Activated T-helper 1 cell treated with anti-CD3 and anti-CD28 coated beads, Interleukin-12 subunit alpha, Interleukin-12 subunit beta, Interleukin-2, Interleukin-4 antibody, amounts not matched to agents 30 ng/mL and 10 ng/mL and 1 ng/mL, durations not matched to agents 14 hours and 24 hours and 36 hours (primary cell): ENCODE measurements at regions of chr11 and their contacts with region 1.

Region 1: DNA sequence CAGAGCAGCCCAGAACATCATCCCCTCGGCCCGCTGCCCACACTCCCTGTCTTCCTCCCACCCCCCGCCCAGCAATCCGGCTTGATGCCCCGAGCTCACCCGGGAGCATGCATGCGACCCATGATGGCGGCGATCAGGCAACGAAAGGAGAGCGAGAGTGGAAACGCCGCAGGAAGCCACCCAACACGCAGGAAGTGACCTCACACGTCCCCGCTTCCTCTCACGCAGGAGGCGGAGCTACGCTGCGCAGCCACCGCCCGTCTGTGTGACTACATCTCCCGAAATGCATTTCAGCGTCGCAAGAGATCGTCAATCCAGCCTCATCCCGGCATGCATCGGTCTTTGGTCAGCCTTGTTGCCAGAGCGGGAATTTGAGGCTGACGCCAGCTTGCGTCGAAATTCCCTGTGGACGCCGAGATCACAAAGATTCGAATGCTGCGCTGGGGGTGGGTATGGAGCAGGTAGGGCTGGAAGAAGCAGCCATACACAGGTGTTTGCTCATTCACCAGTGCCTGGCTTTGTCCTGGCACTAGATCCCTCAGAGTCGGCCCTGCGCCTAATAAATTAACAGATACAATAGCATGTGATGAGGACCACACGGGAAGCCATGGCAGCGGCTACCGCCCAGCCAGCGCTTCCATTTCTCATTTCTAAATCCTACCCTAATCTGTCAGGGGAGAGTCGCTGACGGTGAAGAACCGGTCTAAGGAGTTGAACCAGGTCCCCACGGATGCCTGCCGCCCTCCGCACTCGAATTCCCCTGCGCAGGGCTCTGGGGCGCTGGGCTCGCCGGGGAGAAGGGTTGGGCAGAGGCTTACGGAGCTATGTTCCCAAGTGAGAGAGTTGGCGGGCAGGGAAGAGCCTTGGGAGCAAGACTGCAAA is at the start of gene RPS13:
- DNase-seq: peak; percentile 93
- H3K4me3 Mint-ChIP-seq: peak within 1 kb of the TSS; percentile 99
- H3K27ac Mint-ChIP-seq: peak within 1 kb of the TSS; percentile 95
- H3K4me1 Mint-ChIP-seq: peaks cover 39% of the 10 kb centered on the region
- H3K27me3 Mint-ChIP-seq: no peaks in the 10 kb centered on the region
- total RNA-seq, gene RPS13: 1,187 and 1,191 TPM in 2 replicates

Region 2: DNA sequence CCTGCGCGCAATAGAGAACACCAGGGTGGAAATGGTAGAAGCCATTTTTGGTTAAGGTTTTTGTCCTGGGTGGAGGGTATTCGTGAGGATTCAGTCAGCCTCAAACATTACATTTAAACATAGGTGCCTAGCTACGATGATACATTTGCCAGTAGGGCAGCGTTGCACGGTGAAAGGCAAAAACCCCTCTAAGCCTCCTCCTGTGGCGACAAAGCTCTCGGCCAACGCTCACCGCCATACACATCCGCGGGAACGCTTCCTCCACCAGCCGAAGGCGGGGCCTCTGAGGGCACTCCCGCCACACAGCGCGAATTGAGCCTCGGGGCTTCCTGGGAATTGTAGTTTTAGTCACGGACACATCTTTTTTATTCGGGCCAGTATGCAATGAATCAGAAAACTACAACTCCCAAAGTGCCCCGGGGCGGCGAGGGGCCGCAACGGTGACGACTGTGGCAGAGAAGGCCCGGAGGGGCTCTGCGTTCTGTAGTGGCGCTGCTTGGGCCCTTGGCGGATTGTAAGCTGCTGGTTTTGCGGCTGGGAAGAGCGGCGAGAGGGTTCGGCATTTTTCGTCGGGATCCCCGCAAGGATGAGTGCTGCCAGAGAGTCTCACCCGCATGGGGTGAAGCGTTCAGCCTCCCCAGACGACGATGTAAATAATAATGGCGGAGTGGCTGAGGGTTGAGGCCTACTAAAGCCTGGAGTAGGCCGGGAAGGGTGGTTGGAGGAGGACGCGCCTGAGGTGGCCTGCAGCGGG is 339.4 kb before region 1 on chr11 and contains the start of gene C11orf58:
- intact Hi-C with region 1: loop called (anchors 1 kb)
- DNase-seq: peak; percentile 93
- H3K4me3 Mint-ChIP-seq: peak within 1 kb of the TSS; percentile 73
- H3K27ac Mint-ChIP-seq: peak within 1 kb of the TSS; percentile 88
- H3K4me1 Mint-ChIP-seq: peaks cover 32% of the 10 kb centered on the region
- H3K27me3 Mint-ChIP-seq: no peaks in the 10 kb centered on the region
- total RNA-seq, gene C11orf58: 150 and 152 TPM in 2 replicates

Region 3: DNA sequence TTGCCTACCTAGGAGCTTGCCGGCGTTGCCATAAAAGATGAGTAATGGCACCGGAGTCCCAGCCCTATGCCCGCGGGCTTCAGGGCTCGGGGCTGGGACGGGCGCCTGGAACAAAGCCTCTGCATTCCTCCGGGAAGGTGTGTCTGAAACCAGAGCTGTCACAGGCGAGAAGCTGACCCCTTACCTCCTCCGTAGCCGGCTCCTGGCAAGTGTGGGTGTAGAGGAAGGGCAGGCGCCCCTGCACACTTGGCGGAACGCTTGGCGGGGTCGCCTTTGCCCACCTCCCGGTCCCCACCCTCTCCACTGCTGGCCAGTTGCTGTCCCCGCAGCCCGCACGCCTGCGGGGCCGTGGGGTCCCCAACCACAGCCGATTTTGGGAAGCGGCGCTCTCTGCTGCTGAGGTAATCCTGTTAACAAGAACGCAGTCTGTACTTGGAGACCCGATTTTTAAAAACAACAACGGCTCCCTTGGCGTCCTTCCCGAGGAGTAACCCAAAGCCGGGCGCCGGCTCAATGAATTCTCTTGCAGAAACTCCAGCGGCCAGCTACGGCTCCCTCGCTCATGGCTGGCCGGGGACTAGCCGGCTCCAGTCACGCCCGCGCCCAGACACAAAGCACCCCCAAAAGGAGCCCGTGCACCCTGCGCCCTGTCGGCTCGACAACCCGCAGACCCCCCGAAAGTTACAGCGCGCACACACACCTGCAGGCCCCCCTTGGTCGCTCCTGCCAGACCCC is 152.8 kb before region 1 on chr11:
- intact Hi-C with region 1: loop called (anchors 5 kb)
- DNase-seq: no peak
- H3K4me3 Mint-ChIP-seq: peak overlapping the region; percentile 71
- H3K27ac Mint-ChIP-seq: no peak overlapping the region
- H3K4me1 Mint-ChIP-seq: peaks cover 6% of the 10 kb centered on the region
- H3K27me3 Mint-ChIP-seq: peaks cover 56% of the 10 kb centered on the region

Region 4: DNA sequence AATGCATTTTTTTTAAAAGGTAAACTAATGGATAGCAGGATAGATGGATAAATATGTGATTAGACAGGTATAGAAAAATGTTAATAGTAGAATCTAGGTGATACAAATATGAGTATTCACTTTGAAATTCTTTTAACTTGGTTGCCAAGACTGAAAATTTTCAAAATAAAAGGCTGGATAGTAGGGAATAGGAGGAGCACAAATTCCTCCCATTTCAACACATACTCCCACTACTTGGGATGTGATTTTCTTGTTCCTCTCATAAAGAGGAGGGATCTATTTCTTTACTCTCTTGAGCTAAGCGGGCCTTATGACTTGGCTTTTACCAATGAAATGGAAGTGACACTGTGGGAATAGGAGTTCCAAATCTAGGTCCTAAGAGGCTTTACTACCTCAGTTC is 94.2 kb after region 1 on chr11:
- intact Hi-C with region 1: no loop called
- DNase-seq: no peak
- H3K4me3 Mint-ChIP-seq: no peak overlapping the region
- H3K27ac Mint-ChIP-seq: no peak overlapping the region
- H3K4me1 Mint-ChIP-seq: peaks cover 8% of the 10 kb centered on the region
- H3K27me3 Mint-ChIP-seq: no peaks in the 10 kb centered on the region

Region 5: DNA sequence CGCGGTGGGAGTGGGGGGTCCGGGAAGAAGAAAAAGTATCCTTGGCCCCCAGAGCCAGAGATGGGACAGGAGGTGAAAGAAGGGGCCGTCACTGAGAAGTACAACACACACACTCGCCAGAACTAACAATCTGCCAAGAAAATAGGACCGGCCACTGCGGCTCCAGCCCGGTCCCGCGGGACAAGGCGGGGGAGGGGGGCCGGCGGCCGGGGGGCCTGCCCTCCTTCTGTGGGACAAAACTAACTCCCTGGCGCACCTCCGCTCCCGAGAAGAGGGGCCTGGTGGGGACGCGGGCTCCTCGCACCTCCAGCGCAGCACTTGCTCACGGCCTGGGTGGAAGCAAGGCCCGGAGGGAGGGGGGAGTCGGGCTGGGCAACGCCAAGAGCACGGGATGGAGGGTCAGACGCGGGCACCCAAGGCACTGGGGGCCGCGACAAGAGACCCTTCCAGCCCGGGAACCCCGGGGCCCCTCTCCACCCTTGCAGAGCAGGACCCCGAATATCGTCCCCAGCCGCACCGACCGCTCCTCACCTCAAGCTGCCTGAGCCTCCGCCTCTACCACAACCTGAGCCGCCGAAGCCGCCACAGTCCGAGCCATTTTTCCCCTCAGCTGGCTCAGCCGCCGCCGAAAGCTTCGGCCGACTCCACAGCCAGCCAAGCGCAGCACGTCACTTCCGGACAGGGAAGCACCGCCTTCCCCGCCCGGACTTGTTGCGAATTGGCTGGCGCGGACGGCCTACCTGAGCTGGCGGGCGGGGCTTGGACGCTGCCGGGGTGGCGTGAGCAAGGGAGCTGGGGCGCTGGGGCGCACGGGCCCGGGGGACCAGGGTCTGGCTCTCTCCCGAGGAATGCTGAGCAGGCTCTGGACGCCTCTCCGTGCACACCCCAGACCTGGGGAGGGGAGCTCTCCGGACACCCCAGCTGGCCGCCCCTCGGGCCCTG is 129.8 kb after region 1 on chr11 and contains the start of gene PIK3C2A:
- intact Hi-C with region 1: loop called (anchors 1 kb)
- DNase-seq: peak; percentile 93
- H3K4me3 Mint-ChIP-seq: peak within 1 kb of the TSS; percentile 98
- H3K27ac Mint-ChIP-seq: peak within 1 kb of the TSS; percentile 94
- H3K4me1 Mint-ChIP-seq: peaks cover 35% of the 10 kb centered on the region
- H3K27me3 Mint-ChIP-seq: no peaks in the 10 kb centered on the region
- total RNA-seq, gene PIK3C2A: 31.7 and 31.8 TPM in 2 replicates

Region 6: DNA sequence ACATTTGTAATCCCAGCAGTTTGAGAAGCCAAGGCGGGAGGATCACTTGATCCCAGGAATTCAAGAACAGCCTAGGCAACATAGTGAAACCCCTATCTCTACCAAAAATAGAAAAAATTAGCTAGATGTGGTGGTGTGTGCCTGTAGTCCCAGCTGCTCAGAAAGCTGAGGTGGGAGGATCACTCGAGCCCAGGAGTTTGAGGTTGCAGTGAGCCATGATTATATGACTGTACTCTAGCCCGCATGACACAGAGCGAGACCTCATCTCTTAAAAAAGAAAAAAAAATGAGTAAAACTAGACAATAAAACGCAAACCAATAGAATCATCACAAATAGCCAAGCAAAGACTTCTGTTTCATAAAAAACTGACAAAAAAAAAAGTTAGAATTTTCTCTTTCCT is 220.5 kb after region 1 on chr11:
- intact Hi-C with region 1: loop called (anchors 5 kb)
- DNase-seq: peak; percentile 23
- H3K4me3 Mint-ChIP-seq: no peak overlapping the region
- H3K27ac Mint-ChIP-seq: peak overlapping the region; percentile 64
- H3K4me1 Mint-ChIP-seq: peaks cover 31% of the 10 kb centered on the region
- H3K27me3 Mint-ChIP-seq: no peaks in the 10 kb centered on the region

Region 7: DNA sequence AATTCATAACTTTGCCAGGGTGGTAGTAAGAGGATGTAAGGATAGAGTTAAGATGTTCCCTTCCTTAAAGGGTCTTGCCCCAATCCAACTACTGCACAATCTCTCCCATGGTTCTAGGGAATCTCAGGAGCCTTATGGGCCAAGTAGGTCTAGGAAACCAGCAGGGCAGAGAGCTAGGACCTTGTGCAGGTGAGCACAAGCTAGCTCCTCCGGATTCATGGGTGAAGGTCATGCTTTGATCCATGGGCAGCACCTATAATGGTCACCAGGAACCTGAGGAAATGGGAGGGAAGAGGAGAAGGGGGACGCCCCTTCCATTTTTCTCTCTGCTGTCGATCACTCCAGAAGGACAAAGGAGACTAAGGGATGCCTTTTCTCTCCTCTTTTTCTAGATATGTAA is 293.9 kb after region 1 on chr11:
- intact Hi-C with region 1: no loop called
- DNase-seq: no peak
- H3K4me3 Mint-ChIP-seq: no peak overlapping the region
- H3K27ac Mint-ChIP-seq: no peak overlapping the region
- H3K4me1 Mint-ChIP-seq: peaks cover 19% of the 10 kb centered on the region
- H3K27me3 Mint-ChIP-seq: peaks cover 8% of the 10 kb centered on the region

Region 8: DNA sequence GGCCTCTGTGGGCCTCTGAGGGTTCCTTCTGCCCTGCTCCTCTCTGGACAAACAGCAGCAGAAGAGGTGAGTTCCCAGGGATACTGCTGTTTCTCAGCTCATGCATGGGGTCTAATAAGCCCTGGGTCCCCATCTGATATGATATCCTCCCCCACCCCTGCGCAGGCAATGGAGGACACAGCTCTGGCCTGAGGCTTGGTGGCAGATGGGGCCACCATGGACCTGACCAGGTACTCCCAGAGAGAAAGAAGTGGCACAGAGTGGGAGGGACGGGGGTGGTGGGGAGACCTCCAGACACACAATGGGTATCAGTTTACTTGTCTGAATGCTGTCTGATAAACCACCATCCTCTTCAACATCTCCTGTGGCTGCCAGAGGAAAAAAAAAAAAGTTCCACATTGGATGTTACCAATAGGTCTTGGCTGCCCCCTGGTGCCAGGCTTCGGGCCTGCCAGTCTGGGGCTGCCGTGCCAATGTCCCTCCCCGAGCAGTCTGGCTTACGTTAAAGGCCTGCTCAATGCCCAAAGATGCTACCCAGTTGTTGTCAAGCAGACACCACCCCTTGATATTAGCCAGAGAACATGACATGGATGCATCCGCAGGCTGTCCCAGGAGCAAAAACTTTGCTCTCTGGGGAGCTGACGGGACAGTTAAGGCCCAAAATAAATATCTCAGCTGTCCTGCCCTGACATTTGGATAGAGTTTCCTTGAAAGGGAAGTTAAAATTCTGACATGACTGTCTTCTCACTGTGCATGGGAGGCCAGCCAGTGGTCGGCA is 426.8 kb after region 1 on chr11:
- intact Hi-C with region 1: loop called (anchors 10 kb)
- DNase-seq: peak; percentile 68
- H3K4me3 Mint-ChIP-seq: no peak overlapping the region
- H3K27ac Mint-ChIP-seq: no peak overlapping the region
- H3K4me1 Mint-ChIP-seq: no peaks in the 10 kb centered on the region
- H3K27me3 Mint-ChIP-seq: peaks cover 11% of the 10 kb centered on the region

Region 9: GRCh38 chr11:18395735-18396504 is 1318.2 kb after region 1 on chr11:
- intact Hi-C with region 1: loop called (anchors 2 kb)
- DNase-seq: peak; percentile 96
- H3K4me3 Mint-ChIP-seq: peak overlapping the region; percentile 99
- H3K27ac Mint-ChIP-seq: peak overlapping the region; percentile 98
- H3K4me1 Mint-ChIP-seq: peaks cover 67% of the 10 kb centered on the region
- H3K27me3 Mint-ChIP-seq: no peaks in the 10 kb centered on the region